Head of caudate nucleus (tissue), 42 donors: ENCODE measurements at regions of chr11 and their contacts with region 1.

Region 1: GRCh38 chr11:66001942-66002647 is at the starts of genes BANF1 and EIF1AD:
- DNase-seq: peak; percentile 85 to 99 (median 96)

Region 2: GRCh38 chr11:65859200-65859811 is 142.8 kb before region 1 on chr11:
- intact Hi-C with region 1: no loop called
- DNase-seq: peak; percentile 96 to 100 (median 98)

Region 3: GRCh38 chr11:65888163-65888814 is 113.8 kb before region 1 on chr11 and contains the start of gene FIBP:
- intact Hi-C with region 1: loop called (anchors 10 kb)
- DNase-seq: peak; percentile 92 to 99 (median 97)

Region 4: DNA sequence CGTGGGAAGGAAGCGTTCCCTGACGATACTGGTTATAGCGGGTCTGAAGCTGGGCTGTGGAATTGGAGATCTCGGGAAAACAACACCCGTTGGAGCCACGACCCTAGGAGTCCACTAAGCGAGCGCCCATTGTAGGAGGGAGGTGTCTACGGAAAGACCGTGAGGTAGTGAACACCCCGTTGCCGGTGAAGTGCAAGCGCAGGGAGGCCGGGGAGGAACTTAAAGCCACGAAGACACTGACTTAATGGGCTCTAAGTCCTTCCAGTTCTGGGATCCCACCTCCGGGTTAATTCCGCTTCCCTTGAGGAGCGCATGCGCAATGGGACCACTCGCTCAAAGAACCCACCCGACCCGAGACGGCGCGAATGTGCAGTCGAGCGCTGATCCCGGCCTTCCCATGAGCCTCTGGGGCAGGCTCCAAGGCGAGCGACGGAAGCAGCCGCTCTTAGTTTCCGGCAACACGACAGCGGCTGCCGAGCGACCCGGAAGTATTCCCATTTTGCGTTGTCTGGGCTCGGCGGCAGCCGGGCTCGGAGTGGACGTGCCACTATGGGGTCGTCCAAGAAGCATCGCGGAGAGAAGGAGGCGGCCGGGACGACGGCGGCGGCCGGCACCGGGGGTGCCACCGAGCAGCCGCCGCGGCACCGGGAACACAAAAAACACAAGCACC is 40.7 kb before region 1 on chr11 and contains the start of gene SART1:
- intact Hi-C with region 1: loop called (anchors 1 kb)
- DNase-seq: peak; percentile 93 to 100 (median 98)

Region 5: GRCh38 chr11:66051766-66052663 is 49.9 kb after region 1 on chr11 and contains the start of gene SF3B2:
- intact Hi-C with region 1: loop called (anchors 1 kb)
- DNase-seq: peak; percentile 98 to 100 (median 99)